Aorta (tissue), 5 donors: ENCODE measurements at regions of chr17 and their contacts with region 1.

Region 1: DNA sequence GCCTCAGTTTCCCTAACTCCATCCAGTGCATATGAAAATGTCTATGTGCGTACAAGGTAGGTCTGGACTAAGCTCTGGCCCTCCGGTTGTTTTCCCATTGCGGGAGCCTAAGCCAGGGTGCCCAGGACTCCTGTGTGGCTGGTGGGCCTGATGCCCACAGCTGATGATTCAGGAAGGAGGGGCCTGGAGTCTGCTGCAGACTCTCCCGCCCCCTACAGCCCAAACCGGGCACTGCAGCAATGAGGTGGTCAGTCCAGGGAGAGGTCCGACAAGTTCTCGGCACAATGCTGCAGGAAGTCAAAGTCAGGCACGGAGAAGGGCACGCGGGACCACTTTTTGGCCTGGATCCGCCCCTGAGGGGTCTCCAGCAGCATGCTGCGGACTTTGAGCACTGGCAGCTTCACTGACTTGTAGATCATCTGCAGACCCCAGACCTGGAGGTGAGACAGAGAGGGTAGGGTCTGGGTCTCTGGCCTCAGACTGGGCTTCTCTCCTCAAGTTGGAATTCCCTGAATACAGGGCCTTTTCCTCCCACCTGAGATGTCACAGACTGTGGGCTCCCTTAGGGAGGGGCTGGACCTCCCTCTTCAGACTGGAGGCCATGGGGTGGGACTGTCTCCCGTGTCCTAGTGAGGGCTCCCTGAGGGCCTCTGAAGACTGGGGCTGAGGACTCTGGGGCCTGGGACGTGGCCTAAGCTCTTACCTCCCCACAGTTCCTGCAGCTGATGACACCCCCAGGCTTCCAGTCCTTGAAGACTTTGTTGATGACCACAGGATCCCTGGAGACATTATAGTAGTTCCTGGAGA is 3.4 kb upstream of the ZNF385C start:
- DNase-seq: peak; percentile 86 to 95
- ATAC-seq: peak; percentile 79
- H3K4me3 ChIP-seq: no peak overlapping the region
- H3K27ac ChIP-seq: no peak overlapping the region
- H3K4me1 ChIP-seq: no peaks in the 10 kb centered on the region
- H3K27me3 ChIP-seq: no peaks in the 10 kb centered on the region

Region 2: DNA sequence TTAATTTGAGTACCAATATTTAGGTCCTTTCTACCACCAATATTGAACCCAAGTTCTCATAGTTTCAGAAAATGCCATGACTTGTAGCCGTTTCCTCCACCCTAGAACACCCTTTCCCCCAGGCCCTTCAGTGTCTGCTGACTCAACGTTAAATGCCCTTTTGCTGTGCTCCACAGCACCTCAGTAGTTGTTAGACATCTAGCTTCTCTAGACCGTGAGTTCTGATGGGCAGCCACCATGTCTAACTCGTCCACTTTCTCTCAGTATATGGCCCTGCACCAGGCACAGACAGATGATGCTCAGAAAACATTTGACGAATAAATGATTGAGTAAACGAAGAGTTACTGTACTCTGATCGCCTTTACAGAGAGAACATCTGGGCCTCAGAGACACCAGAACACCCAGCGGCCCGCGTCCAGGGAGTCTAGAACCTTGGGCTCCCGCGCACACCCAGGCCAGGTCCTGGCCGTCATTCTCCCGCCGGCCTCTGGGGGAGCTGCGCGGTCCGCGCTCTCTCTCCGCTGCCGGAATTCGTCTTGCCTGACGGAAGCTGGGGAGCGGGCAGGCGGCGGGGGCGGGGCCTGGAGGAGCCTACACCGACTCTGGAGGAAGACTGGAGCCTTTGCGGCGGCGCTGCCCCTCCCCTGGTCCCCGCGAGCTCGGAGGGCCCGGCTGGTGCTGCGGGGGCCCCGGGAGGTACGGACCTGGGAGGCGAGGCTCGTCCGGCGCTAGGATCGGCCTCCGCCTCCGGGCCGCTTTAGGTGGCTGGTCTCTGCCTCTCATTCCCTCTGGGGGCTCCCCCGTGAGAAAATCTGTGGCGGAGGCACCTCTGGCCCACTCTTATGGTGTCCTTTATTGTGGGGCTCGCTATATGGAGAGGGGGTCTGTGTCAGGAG is 82.0 kb before region 1 on chr17 and contains the start of gene NKIRAS2:
- intact Hi-C with region 1: loop called in 1 of 2 experiments (anchors 2 kb)
- DNase-seq: peak; percentile 97 to 98
- ATAC-seq: peak; percentile 92
- H3K4me3 ChIP-seq: peak within 1 kb of the TSS; percentile 64 to 96
- H3K27ac ChIP-seq: peak within 1 kb of the TSS; percentile 25 to 58
- H3K4me1 ChIP-seq: no peaks in the 10 kb centered on the region
- H3K27me3 ChIP-seq: no peaks in the 10 kb centered on the region
- total RNA-seq, gene NKIRAS2: 25.3 to 28.5 TPM

Region 3: DNA sequence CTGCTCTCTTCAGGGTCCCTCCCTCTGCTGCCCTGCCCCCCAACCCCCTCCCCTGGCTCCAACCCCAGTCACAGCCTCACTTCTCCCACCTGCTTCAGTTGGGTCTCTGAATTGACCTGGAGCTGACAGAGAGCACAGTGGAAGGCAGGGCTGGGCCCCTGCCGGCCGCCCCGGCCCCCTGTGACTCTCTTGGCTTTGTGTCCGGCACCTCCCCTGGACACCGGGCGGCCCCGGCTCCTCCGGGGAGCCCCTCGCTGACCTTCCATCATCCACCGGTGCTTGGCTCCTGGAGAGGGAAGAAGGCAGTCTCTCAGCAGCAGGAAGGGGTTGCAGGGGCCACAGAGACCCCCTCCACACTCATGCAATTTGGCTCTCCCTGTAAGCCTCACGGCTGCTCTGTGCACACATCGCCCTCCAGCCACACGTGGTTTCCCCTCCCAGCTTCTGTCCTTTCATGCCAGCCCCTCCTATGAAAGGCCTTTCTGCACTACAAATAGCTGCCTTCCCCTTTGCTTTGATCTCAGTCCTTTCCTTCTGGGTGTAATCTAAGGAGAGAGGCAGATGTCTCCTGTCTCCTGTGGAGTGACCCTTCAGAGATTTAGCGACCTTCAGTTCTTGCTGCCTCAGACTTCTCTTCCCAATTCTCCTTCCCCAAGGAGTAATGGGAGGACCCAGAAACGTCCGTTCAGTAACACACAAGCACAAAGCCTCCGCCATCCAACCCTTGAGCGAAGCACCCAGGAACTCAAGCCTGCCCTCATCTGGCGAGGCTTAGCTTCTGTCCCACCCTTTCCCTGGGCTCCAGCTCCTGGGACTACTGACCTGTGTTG is 73.5 kb before region 1 on chr17:
- intact Hi-C with region 1: loop called (anchors 2 to 5 kb)
- DNase-seq: no peak
- ATAC-seq: no peak
- H3K4me3 ChIP-seq: no peak overlapping the region
- H3K27ac ChIP-seq: no peak overlapping the region
- H3K4me1 ChIP-seq: no peaks in the 10 kb centered on the region
- H3K27me3 ChIP-seq: no peaks in the 10 kb centered on the region

Region 4: DNA sequence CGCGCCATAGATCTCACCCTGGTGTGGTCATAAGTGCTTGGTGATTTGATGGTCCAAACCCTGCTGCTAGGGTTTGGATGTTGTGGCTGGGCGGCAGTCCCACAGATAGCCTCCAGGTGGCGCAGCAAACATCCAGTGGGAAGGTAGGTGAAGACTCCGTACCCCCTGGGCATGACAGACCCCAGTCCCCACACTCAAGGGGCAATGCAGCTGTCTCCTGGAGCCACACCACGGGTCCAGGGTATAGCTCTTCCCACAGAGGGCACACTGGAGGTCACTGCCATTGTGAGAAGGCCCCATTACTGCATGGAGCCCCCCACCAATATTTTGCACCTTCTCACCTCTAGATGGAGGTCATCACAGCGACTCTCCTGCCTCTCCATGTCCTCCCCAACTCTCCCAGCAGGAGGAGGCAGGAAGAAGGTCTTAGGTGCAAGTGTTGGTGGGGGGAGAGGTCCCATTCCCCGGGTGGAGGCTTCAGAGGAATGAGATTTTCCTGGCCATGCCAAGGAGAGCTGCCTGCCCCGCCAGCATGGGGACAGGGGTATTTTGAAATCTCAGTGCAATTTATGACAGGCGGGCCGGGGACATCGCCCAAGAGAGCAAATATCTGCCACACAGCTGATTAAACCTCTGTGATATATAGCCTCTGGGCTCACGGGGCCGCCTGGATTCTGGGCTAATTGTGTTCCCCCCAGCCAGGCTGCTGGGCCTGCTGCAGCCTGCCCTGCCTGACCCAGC is 34.2 kb before region 1 on chr17:
- intact Hi-C with region 1: loop called (anchors 5 kb)
- DNase-seq: peak; percentile 67 to 89
- ATAC-seq: peak; percentile 75
- H3K4me3 ChIP-seq: no peak overlapping the region
- H3K27ac ChIP-seq: no peak overlapping the region
- H3K4me1 ChIP-seq: no peaks in the 10 kb centered on the region
- H3K27me3 ChIP-seq: no peaks in the 10 kb centered on the region